ENCODE measurements at regions of chr3 and their contacts with region 1.

Region 1: DNA sequence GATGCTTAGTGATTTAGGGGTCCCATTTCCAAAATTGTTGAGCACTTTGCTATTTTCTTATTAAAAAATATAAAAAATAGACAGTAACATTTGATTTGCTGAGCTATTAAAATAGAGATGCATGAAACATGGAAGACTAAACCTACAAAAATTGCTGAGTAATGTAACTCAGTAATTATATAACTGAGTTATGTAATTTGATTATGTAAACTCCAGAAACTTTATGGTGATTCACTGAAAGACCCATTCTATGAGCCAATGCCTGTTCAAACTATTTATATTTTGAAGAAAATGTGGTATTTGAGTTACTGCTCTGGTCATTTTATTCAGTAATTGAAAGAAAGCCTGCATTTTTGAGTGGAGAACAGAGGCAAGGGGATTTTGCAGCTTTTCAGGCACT is 1221.5 kb upstream of the ALCAM start:
- DNase-seq: no peak
- ATAC-seq: no peak
- H3K4me3 Mint-ChIP-seq: no peak overlapping the region
- H3K27ac Mint-ChIP-seq: no peak overlapping the region
- H3K4me1 Mint-ChIP-seq: no peaks in the 10 kb centered on the region
- H3K27me3 Mint-ChIP-seq: no peaks in the 10 kb centered on the region

Region 2: DNA sequence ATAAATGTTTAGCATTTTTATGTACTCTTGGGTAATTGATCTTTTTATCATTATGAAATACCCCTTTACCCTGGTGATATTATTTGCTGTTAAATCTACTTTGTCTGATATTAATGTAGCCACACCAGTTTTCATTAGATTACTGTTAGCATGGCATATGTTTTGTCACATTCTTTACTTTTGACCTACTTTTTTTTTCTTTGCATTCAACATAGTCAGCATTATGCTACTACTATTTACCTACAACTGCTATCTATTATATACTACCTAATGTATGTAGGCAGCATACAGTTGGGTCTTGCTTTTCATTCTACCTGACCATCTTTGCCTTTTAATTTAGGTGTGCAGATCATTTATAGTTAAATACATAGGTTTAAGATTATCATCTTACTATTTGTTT is 208.1 kb before region 1 on chr3:
- CTCF ChIA-PET with region 1: no interaction called
- POLR2A ChIA-PET with region 1: no interaction called
- intact Hi-C with region 1: no loop called
- DNase-seq: no peak
- ATAC-seq: no peak
- H3K4me3 Mint-ChIP-seq: no peak overlapping the region
- H3K27ac Mint-ChIP-seq: no peak overlapping the region
- H3K4me1 Mint-ChIP-seq: no peaks in the 10 kb centered on the region
- H3K27me3 Mint-ChIP-seq: no peaks in the 10 kb centered on the region

Region 3: GRCh38 chr3:104176706-104177105 is 31.5 kb after region 1 on chr3:
- CTCF ChIA-PET with region 1: no interaction called
- POLR2A ChIA-PET with region 1: no interaction called
- intact Hi-C with region 1: no loop called
- DNase-seq: no peak
- ATAC-seq: no peak
- H3K4me3 Mint-ChIP-seq: no peak overlapping the region
- H3K27ac Mint-ChIP-seq: no peak overlapping the region
- H3K4me1 Mint-ChIP-seq: no peaks in the 10 kb centered on the region
- H3K27me3 Mint-ChIP-seq: no peaks in the 10 kb centered on the region

Region 4: DNA sequence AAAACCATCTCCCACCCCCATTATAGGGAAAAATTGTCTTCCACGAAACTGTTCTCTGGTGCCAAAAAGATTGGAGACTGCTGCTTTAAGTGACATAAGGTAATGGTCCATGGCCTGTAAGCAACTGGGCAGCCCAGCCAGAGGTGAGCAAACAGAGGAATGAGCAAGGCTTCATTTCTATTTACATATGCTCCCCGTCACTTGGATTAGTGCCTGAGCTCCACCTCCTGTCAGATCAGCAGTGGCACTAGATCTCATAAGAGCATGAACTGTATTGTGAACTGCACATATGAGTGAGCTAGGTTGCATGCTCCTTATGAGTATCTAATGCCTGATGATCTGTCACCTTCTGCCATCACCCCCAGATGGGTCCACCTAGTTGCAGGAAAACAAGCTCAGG is 61.8 kb after region 1 on chr3:
- CTCF ChIA-PET with region 1: no interaction called
- POLR2A ChIA-PET with region 1: no interaction called
- intact Hi-C with region 1: loop called in 1 of 2 experiments (anchors 10 kb)
- DNase-seq: no peak
- ATAC-seq: no peak
- H3K4me3 Mint-ChIP-seq: no peak overlapping the region
- H3K27ac Mint-ChIP-seq: no peak overlapping the region
- H3K4me1 Mint-ChIP-seq: no peaks in the 10 kb centered on the region
- H3K27me3 Mint-ChIP-seq: no peaks in the 10 kb centered on the region

Region 5: GRCh38 chr3:104564045-104564643 is 419.0 kb after region 1 on chr3:
- CTCF ChIA-PET with region 1: no interaction called
- POLR2A ChIA-PET with region 1: no interaction called
- intact Hi-C with region 1: no loop called
- DNase-seq: peak; percentile 77
- ATAC-seq: no peak
- H3K4me3 Mint-ChIP-seq: no peak overlapping the region
- H3K27ac Mint-ChIP-seq: no peak overlapping the region
- H3K4me1 Mint-ChIP-seq: peaks cover 2% of the 10 kb centered on the region
- H3K27me3 Mint-ChIP-seq: no peaks in the 10 kb centered on the region